ENCODE measurements at regions of chr5 and their contacts with region 1.

Region 1: DNA sequence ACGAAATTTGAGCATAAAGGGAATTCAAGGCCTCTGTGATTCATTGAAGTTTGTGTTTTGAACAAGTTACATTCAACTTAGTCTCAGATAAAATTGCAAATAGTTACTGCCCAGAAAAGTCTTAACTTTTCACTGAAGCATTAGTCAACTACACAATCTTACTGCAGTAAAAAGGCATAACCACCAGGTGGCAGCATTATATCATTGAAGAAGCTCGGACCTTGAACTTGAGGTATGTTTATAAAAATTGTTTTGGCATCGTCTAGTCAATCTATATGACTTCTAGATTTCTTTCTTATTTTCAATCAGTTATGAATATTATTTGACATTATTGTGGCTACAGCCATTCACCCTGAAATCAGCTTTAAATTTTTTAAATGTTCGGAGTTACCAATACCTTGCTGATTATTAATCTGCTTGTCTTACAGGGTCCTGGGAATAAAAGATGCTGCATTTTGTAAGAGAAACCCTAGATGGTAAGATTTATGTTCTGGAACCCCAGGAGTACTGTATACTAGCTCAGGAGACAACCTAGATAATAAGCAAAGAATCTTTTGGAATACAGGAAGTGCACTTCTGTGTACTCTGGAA is 83.9 kb upstream of the GRAMD2B start:
- DNase-seq: peak in 7 of 9 donors; percentile 48 to 68 (median 65)
- ATAC-seq: peak; percentile 74
- H3K4me3 ChIP-seq: no peak overlapping the region
- H3K4me3 Mint-ChIP-seq: no peak overlapping the region
- H3K27ac ChIP-seq: no peak overlapping the region
- H3K27ac Mint-ChIP-seq: no peak overlapping the region
- H3K4me1 ChIP-seq: no peaks in the 10 kb centered on the region
- H3K4me1 Mint-ChIP-seq: no peaks in the 10 kb centered on the region
- H3K27me3 ChIP-seq: no peaks in the 10 kb centered on the region
- H3K27me3 Mint-ChIP-seq: peaks cover 9 to 27% (median 20%) of the 10 kb centered on the region in 5 donors

Region 2: DNA sequence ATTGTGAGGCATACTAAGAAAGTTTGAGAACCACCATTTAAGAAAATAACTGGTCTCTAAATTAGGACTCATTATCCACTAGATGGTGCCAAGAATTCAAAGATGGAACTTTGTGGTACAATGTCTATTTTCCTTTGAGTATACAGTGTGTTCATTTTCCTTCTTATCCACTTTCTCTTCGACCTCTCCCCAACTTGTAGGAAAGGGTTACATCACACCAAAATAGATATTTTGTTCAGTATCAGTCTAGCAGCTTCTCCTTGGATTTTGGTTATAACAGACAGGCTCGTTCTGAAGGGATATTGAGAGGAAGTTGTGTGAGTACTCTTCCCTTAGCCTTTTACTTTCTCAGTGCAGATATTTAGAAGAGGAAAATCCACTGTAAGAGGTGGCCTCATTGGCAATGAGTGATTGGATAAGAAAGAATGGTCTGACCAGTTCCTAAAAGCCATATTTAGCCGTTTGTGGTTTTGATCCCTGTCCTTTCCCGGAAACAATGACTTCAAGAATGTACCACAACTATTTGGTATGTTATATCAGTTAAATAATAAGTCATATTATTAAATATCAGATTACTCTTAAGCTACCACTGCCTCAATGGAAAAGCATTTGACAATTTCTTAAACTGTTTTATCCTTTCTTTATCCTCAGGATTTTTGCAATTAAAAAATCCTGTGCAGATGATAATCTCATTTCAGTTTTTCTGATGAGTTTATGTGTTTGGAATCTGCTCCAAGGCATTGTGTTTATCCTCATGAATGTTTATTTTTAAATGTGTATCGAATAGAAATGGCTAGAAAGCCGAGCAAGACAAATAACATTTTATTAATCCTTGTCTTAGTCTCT is 14.9 kb after region 1 on chr5:
- CTCF ChIA-PET with region 1: interaction called, 15 read pairs
- POLR2A ChIA-PET with region 1: no interaction called
- intact Hi-C with region 1: loop called (anchors 1 to 2 kb)
- DNase-seq: peak in 7 of 9 donors; percentile 26 to 66 (median 53)
- ATAC-seq: peak; percentile 78
- H3K4me3 ChIP-seq: no peak overlapping the region
- H3K4me3 Mint-ChIP-seq: peak overlapping the region; percentile 12 to 80 (median 72)
- H3K27ac ChIP-seq: no peak overlapping the region
- H3K27ac Mint-ChIP-seq: peak overlapping the region in 7 of 9 donors; percentile 19 to 65 (median 36)
- H3K4me1 ChIP-seq: peaks cover 0 to 12% of the 10 kb centered on the region in 2 donors
- H3K4me1 Mint-ChIP-seq: peaks cover 3 to 21% (median 15%) of the 10 kb centered on the region in 7 donors
- H3K27me3 ChIP-seq: no peaks in the 10 kb centered on the region
- H3K27me3 Mint-ChIP-seq: peaks cover 0 to 16% (median 0%) of the 10 kb centered on the region in 5 donors

Region 3: GRCh38 chr5:126499853-126500342 is 160.6 kb after region 1 on chr5:
- CTCF ChIA-PET with region 1: interaction called, 9 read pairs
- POLR2A ChIA-PET with region 1: no interaction called
- intact Hi-C with region 1: loop called in 1 of 2 experiments (anchors 1 kb)
- DNase-seq: peak in 7 of 9 donors; percentile 36 to 84 (median 78)
- ATAC-seq: peak; percentile 88
- H3K4me3 ChIP-seq: no peak overlapping the region
- H3K4me3 Mint-ChIP-seq: peak overlapping the region in 5 of 10 donors; percentile 10 to 54 (median 24)
- H3K27ac ChIP-seq: no peak overlapping the region
- H3K27ac Mint-ChIP-seq: peak overlapping the region in 8 of 9 donors; percentile 22 to 88 (median 76)
- H3K4me1 ChIP-seq: peaks cover 0 to 25% of the 10 kb centered on the region in 2 donors
- H3K4me1 Mint-ChIP-seq: peaks cover 4 to 58% (median 44%) of the 10 kb centered on the region in 7 donors
- H3K27me3 ChIP-seq: no peaks in the 10 kb centered on the region
- H3K27me3 Mint-ChIP-seq: no peaks in the 10 kb centered on the region

Region 4: DNA sequence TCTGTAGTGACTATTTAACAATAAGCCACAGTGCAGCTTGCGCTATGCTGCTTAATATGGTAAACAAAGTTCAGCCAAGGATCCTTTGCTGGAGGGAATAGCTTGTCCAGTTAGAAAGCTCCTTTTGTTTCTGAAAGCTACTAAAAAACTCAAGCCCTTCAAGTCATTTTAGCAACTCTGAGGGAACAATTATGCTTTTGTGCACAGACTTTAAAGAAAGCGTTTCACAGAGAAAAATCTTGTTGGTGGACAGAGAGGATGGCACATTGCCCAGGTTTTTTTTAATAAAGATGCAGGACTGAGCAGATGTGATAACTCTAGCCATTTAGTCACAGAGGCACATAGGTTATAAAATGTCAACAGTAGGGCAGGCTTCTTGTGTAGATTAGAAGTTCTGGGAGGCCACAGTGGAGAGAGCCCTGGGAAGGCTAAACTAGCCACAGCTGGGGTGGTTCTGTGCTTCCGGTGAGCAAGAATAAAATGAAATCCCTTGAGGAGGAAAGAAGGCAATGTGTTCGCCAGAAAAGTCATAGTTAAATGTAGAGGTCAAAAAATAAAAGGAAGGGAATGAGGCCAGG is 192.3 kb after region 1 on chr5:
- CTCF ChIA-PET with region 1: interaction called, 36 read pairs
- POLR2A ChIA-PET with region 1: no interaction called
- intact Hi-C with region 1: no loop called
- DNase-seq: no peak
- ATAC-seq: no peak
- H3K4me3 ChIP-seq: no peak overlapping the region
- H3K4me3 Mint-ChIP-seq: no peak overlapping the region
- H3K27ac ChIP-seq: no peak overlapping the region
- H3K27ac Mint-ChIP-seq: peak overlapping the region in 1 of 9 donors; percentile 16
- H3K4me1 ChIP-seq: no peaks in the 10 kb centered on the region
- H3K4me1 Mint-ChIP-seq: no peaks in the 10 kb centered on the region
- H3K27me3 ChIP-seq: no peaks in the 10 kb centered on the region
- H3K27me3 Mint-ChIP-seq: peaks cover 0 to 5% (median 0%) of the 10 kb centered on the region in 5 donors

Region 5: GRCh38 chr5:126536874-126537273 is 197.6 kb after region 1 on chr5:
- CTCF ChIA-PET with region 1: interaction called, 36 read pairs
- POLR2A ChIA-PET with region 1: no interaction called
- intact Hi-C with region 1: loop called (anchors 1 kb)
- DNase-seq: no peak
- ATAC-seq: no peak
- H3K4me3 ChIP-seq: no peak overlapping the region
- H3K4me3 Mint-ChIP-seq: no peak overlapping the region
- H3K27ac ChIP-seq: no peak overlapping the region
- H3K27ac Mint-ChIP-seq: no peak overlapping the region
- H3K4me1 ChIP-seq: no peaks in the 10 kb centered on the region
- H3K4me1 Mint-ChIP-seq: peaks cover 0 to 9% (median 0%) of the 10 kb centered on the region in 7 donors
- H3K27me3 ChIP-seq: no peaks in the 10 kb centered on the region
- H3K27me3 Mint-ChIP-seq: peaks cover 0 to 6% (median 0%) of the 10 kb centered on the region in 5 donors

Region 6: GRCh38 chr5:126544087-126544740 is 204.9 kb after region 1 on chr5:
- CTCF ChIA-PET with region 1: interaction called, 36 read pairs
- POLR2A ChIA-PET with region 1: no interaction called
- intact Hi-C with region 1: loop called (anchors 1 kb)
- DNase-seq: peak in 5 of 9 donors; percentile 14 to 30 (median 28)
- ATAC-seq: peak; percentile 48
- H3K4me3 ChIP-seq: no peak overlapping the region
- H3K4me3 Mint-ChIP-seq: no peak overlapping the region
- H3K27ac ChIP-seq: no peak overlapping the region
- H3K27ac Mint-ChIP-seq: peak overlapping the region in 1 of 9 donors; percentile 12
- H3K4me1 ChIP-seq: no peaks in the 10 kb centered on the region
- H3K4me1 Mint-ChIP-seq: no peaks in the 10 kb centered on the region
- H3K27me3 ChIP-seq: no peaks in the 10 kb centered on the region
- H3K27me3 Mint-ChIP-seq: peaks cover 0 to 6% (median 0%) of the 10 kb centered on the region in 5 donors

Region 7: DNA sequence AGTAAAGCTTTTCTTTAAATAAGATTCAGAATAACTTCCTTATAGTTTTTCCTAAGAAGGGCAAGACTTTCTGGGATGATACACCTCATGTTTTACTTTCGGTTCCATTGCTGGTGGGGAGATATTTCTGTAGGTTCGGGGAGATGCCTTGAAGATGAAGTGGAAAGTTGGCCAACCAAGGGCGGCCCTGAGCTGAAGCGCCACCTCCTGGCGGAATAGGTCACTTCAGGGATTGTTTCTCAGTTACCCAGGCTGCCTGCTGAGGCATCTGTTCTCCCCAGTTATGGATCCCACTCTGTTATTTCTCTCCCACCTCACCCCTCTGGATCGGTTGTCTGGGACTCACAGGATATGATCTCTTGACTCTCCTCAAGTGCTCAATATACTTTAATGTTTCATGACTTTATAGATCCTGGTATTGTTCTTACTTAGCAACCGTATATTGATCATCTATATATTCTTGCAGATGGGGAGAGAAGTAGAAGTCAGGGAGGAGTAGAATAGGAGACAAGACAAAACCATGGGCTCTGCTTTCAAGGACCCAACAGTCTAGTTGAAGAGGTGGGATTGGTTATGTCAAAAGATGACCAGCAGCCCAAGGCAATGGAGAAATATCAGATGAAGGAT is 974.6 kb after region 1 on chr5:
- CTCF ChIA-PET with region 1: no interaction called
- POLR2A ChIA-PET with region 1: no interaction called
- intact Hi-C with region 1: loop called in 1 of 2 experiments (anchors 10 kb)
- DNase-seq: peak; percentile 12 to 68 (median 50)
- ATAC-seq: peak; percentile 81
- H3K4me3 ChIP-seq: no peak overlapping the region
- H3K4me3 Mint-ChIP-seq: peak overlapping the region in 1 of 10 donors; percentile 2
- H3K27ac ChIP-seq: no peak overlapping the region
- H3K27ac Mint-ChIP-seq: no peak overlapping the region
- H3K4me1 ChIP-seq: no peaks in the 10 kb centered on the region
- H3K4me1 Mint-ChIP-seq: peaks cover 0 to 7% (median 0%) of the 10 kb centered on the region in 7 donors
- H3K27me3 ChIP-seq: no peaks in the 10 kb centered on the region
- H3K27me3 Mint-ChIP-seq: peaks cover 0 to 32% (median 4%) of the 10 kb centered on the region in 5 donors

Measured in naive thymus-derived CD4-positive, alpha-beta T cell (primary cell).